Stomach (tissue), 19 donors: ENCODE measurements at regions of chr22 and their contacts with region 1.

Region 1: DNA sequence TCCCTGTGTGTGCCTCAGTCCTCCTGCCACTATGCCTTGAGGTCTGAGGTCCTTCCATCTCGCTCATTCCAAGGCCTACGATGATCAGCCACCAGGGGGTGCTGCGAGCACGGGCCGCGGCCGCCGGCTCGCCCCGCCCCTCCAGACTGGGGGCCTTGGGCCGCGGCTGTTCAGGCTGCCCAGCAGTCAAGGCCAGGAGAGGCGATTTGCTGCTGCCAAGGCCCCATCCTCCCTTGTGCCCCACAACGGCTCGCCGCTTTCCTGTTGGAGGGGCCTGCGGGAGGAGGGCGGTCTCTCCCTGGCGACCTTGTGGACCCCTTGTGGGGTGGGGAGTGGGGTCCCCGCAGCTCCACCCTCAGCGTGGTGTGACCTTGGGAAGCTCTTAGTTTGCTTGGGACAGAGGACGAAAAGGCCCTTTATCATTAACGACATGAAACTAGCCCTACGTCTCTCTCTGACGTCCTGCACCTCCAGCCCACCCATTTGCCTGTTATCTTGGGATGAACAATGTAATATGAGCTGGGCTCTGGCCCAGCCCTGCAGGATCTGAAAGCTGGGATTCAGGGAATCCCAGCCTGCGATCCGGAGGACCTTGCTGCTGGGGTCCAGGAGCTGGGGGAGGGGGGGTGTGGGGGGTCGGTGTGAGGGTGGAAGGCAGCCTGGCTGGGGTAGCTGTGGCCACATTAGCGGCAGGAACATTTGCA is 5.3 kb upstream of the GALR3 start:
- DNase-seq: peak; percentile 89 to 94
- H3K4me3 ChIP-seq: peak overlapping the region; percentile 27 to 54 (median 44)
- H3K27ac ChIP-seq: peak overlapping the region in 1 of 5 donors; percentile 53
- H3K4me1 ChIP-seq: peaks cover 15 to 24% (median 20%) of the 10 kb centered on the region in 4 donors
- H3K27me3 ChIP-seq: peaks cover 2 to 51% (median 29%) of the 10 kb centered on the region in 3 donors
- CTCF ChIP-seq: peak in 5 of 7 experiments; percentile 88 to 95 (median 94)
- EP300 ChIP-seq: no peak
- POLR2A ChIP-seq: no peak

Region 2: GRCh38 chr22:37676736-37677492 is 140.9 kb before region 1 on chr22:
- intact Hi-C with region 1: no loop called
- DNase-seq: peak; percentile 85 to 96
- H3K4me3 ChIP-seq: peak overlapping the region; percentile 52 to 60 (median 60)
- H3K27ac ChIP-seq: peak overlapping the region; percentile 88 to 94 (median 94)
- H3K4me1 ChIP-seq: peaks cover 41 to 85% (median 70%) of the 10 kb centered on the region in 4 donors
- H3K27me3 ChIP-seq: no peaks in the 10 kb centered on the region
- CTCF ChIP-seq: no peak
- EP300 ChIP-seq: no peak
- POLR2A ChIP-seq: no peak

Region 3: GRCh38 chr22:37708580-37709444 is 109.0 kb before region 1 on chr22:
- intact Hi-C with region 1: no loop called
- DNase-seq: no peak
- H3K4me3 ChIP-seq: no peak overlapping the region
- H3K27ac ChIP-seq: no peak overlapping the region
- H3K4me1 ChIP-seq: no peaks in the 10 kb centered on the region
- H3K27me3 ChIP-seq: no peaks in the 10 kb centered on the region
- CTCF ChIP-seq: no peak
- EP300 ChIP-seq: no peak
- POLR2A ChIP-seq: no peak

Region 4: GRCh38 chr22:37862570-37863325 is 44.9 kb after region 1 on chr22:
- intact Hi-C with region 1: loop called (anchors 5 kb)
- DNase-seq: no peak
- H3K4me3 ChIP-seq: no peak overlapping the region
- H3K27ac ChIP-seq: peak overlapping the region in 3 of 5 donors; percentile 8 to 45 (median 29)
- H3K4me1 ChIP-seq: peaks cover 24 to 48% (median 37%) of the 10 kb centered on the region in 4 donors
- H3K27me3 ChIP-seq: no peaks in the 10 kb centered on the region
- CTCF ChIP-seq: no peak
- EP300 ChIP-seq: no peak
- POLR2A ChIP-seq: no peak

Region 5: GRCh38 chr22:37965940-37966664 is 148.2 kb after region 1 on chr22:
- intact Hi-C with region 1: loop called (anchors 10 kb)
- DNase-seq: no peak
- H3K4me3 ChIP-seq: no peak overlapping the region
- H3K27ac ChIP-seq: no peak overlapping the region
- H3K4me1 ChIP-seq: peaks cover 0 to 17% (median 6%) of the 10 kb centered on the region in 4 donors
- H3K27me3 ChIP-seq: no peaks in the 10 kb centered on the region
- CTCF ChIP-seq: no peak
- EP300 ChIP-seq: no peak
- POLR2A ChIP-seq: no peak